Left cardiac atrium (tissue), 4 donors: ENCODE measurements at regions of chr12 and their contacts with region 1.

Region 1: GRCh38 chr12:949453-950191 is at the start of gene RAD52:
- DNase-seq: peak; percentile 98
- ATAC-seq: peak; percentile 97 to 98
- total RNA-seq, gene RAD52: 6.4 to 6.8 TPM

Region 2: DNA sequence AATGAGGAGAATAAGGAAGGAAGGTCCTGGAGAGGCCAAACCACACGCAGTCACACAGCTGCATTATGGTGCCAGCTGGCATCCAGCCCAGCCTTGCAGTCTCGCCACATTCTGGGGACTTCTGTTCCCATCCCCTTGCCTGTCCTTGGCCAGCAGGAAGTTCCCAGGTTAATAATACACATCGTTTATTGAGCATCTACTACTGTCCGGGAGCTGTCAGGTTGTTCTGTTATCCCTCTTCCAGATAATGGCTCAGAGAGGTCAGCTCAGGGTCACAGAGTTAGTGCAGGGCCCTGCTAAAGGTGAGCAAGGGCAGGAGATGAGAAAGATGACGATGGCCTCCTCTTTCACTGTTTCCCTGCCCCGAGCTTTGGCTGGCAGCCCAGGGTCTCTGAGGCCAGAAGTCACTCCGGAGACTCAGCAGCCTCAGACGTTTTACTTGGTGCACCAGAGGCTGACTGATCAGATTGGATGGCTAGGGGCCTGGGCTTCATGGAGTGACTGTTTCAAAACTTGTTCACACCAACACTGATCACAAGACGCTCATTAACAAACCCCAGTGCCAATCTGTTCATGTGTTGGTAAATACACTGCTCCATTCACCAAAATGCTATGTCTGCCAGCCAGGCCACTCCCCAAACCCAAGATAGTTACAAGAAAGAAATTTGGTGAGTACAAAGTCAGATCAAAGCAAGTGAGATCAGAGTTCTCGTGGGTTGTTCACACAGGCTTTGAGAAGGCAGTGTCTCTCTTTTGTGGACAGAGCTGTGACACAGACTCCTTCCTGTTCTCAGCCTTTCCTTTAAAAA is 410.7 kb before region 1 on chr12:
- intact Hi-C with region 1: no loop called
- DNase-seq: peak; percentile 76
- ATAC-seq: peak; percentile 42 to 59

Region 3: DNA sequence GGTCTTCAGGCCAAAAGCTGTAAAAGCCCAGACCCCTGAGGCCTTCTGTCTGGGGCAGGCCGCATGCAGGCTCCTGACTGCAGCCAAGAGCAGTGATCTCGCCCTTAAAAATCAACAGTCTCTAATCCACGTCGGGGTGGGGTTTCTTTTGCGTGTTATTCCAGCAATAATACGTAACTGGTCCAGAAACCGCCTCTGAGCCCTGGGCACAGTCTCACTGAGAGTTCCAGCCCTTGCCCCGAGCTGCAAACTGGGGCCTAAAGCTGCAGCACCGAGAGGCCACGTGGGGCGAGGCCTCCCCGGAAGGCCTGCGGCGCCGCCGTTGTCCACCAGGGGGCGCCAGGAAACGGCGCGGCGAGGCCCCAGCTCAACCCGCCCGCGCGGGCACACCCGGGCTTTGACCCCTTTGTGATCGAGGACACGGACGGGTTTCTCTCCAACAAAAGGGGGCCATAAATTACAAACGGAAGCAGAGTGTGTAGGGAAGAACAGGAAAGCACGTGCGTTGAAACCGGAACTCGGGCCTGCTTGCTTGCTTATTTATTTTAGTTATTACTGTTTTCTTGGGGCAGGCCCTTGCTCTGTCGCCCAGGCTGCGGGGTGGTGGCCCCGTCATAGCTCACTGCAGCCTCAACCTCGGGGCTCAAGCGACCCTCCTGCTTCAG is 373.5 kb before region 1 on chr12:
- intact Hi-C with region 1: loop called in 1 of 2 experiments (anchors 10 kb)
- DNase-seq: peak; percentile 84
- ATAC-seq: peak; percentile 64 to 69

Region 4: DNA sequence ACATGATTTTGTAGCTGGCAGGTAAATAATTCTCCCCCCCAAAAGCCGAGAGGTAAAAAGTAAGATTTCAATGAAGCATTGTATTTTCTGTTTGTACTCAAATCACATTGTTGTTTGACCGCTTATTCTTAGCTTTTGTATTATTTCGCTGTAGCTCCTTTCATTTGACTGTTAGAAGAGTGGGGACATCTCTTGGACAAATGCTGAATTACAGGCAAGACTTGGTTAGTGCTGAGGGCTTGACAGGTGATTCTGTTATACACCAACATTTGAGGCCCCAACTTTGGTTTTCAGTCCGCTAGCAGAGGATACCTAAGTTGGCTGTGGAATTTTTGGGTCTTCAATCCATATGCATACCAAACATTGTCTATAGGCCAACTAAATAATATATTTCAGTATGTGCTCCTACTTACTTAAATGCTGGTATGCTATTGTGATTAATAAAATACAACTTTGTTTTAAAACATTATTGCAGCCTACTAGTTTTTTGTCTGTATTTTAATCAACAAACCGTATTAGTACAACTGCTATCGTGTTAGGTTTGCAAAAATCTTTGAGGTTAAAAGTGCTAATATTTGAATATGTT is 143.6 kb after region 1 on chr12:
- intact Hi-C with region 1: loop called in 1 of 2 experiments (anchors 5 kb)
- DNase-seq: no peak
- ATAC-seq: peak; percentile 41